H1 (cell line): ENCODE measurements at regions of chr3 and their contacts with region 1.

Region 1: GRCh38 chr3:143016321-143016972 is 15.1 kb downstream of the U2SURP start:
- DNase-seq: no peak
- H3K4me3 ChIP-seq: no peak overlapping the region
- H3K27ac ChIP-seq: no peak overlapping the region
- H3K4me1 ChIP-seq: no peaks in the 10 kb centered on the region
- H3K27me3 ChIP-seq: no peaks in the 10 kb centered on the region
- CTCF ChIP-seq: peak in 1 of 3 experiments; percentile 36; a peak in 2 of 4 replicates
- EP300 ChIP-seq: no peak
- POLR2A ChIP-seq: no peak
- RAD21 ChIP-seq: no peak

Region 2: DNA sequence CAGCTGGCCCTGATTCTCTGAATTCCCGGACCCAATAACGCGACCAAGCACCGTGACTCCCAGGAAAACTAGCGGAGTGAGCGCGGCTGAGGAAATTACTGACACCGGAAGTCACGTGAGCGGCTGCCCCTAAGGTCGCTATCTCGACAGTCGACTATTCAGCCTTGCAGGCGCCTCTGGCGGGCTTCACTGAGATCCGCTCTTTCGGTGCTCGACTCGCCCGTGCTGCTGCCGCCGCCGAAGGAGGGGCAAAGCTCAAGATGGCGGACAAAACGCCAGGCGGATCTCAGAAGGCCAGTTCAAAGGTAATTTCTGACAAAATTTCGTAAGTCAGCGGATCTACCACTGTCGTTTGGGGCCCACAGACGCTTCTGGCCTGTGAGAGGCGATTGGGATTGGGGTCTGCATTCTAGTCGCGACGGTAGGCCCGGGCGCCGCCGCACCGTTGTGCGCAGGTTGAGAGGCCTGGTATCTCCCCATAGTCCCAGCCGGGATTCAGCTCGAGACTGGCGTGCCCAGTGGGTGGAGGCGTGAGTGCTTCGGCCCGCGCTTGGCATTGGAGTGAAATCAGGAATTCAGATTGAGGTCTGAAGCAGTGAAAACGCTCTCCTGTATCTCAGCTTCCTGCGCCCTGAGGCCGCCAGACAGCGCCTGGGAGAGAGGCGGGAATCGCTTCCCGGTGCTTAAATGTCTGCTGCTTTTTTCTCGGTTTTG is 14.9 kb before region 1 on chr3 and contains the start of gene U2SURP:
- CTCF ChIA-PET with region 1: interaction called, 12 read pairs
- POLR2A ChIA-PET with region 1: interaction called, 12 read pairs
- DNase-seq: peak; percentile 86
- H3K4me3 ChIP-seq: peak within 1 kb of the TSS; percentile 81 to 99 (median 90)
- H3K27ac ChIP-seq: peak within 1 kb of the TSS; percentile 89
- H3K4me1 ChIP-seq: peaks cover 0 to 4% (median 2%) of the 10 kb centered on the region in 4 experiments; a peak in 2 of 7 replicates
- H3K27me3 ChIP-seq: no peaks in the 10 kb centered on the region
- CTCF ChIP-seq: no peak
- EP300 ChIP-seq: peak in 1 of 2 experiments; percentile 83; a peak in 1 of 3 replicates
- POLR2A ChIP-seq: peak; percentile 86 to 92
- RAD21 ChIP-seq: no peak
- total RNA-seq, gene U2SURP: 160 and 167 TPM in 2 replicates

Region 3: GRCh38 chr3:143103652-143104051 is 87.2 kb after region 1 on chr3:
- CTCF ChIA-PET with region 1: no interaction called
- POLR2A ChIA-PET with region 1: no interaction called
- DNase-seq: no peak
- H3K4me3 ChIP-seq: no peak overlapping the region
- H3K27ac ChIP-seq: no peak overlapping the region
- H3K4me1 ChIP-seq: no peaks in the 10 kb centered on the region
- H3K27me3 ChIP-seq: no peaks in the 10 kb centered on the region
- CTCF ChIP-seq: no peak
- EP300 ChIP-seq: no peak
- POLR2A ChIP-seq: no peak
- RAD21 ChIP-seq: no peak